Prostate gland (tissue), 2 donors: ENCODE measurements at regions of chr9 and their contacts with region 1.

Region 1: DNA sequence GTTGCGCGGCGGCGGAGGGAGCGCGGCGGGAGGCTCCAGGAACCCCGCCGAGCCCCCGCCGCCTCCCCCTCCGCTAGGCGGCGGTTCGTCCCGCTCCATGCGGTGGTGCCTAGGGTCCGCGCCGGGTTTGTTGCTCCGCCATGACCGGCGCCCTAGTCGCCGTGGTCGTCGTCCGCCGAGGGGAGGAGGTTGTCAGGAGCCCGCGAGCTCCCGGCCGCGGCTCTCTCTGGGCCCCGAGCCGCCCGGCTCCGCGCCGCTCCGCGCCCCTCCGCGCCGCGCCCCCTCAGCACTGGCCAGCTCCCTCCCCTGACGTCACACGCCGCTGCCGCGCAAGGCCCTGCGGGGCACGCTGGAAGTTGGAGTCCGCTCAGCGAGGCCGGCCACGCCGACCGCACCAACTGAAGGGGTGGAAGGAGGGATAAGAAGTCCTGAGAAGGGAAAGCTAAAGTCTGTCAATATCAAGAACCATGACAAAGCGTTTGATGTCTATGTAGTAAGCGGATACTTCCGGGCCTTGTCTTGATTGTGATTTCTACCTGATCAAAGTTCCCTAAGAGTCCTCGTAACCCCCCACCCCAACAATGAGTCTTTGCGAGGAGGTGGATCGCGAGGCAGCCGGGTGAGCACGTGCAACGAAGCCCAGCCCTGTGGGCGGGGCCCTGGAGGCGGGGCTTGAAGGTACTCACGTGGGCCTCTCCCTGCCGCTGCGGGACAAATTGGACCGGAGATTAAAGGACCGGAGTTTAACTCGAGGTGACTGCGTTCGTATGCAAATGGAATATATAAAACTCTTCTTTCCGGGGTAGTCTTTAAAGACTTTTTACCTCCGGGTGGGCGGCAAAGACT is at the start of gene NR6A1:
- DNase-seq: peak; percentile 97
- H3K4me3 ChIP-seq: peak within 1 kb of the TSS; percentile 88 to 93
- H3K27ac ChIP-seq: peak within 1 kb of the TSS; percentile 60 to 74
- H3K4me1 ChIP-seq: no peaks in the 10 kb centered on the region
- H3K27me3 ChIP-seq: peaks cover 2% of the 10 kb centered on the region
- CTCF ChIP-seq: peak in 3 of 4 experiments; percentile 34 to 54 (median 46)
- POLR2A ChIP-seq: peak; percentile 93
- total RNA-seq, gene NR6A1: 1.3 to 53.7 TPM

Region 2: GRCh38 chr9:124441291-124441690 is 330.0 kb before region 1 on chr9:
- intact Hi-C with region 1: no loop called
- DNase-seq: no peak
- H3K4me3 ChIP-seq: no peak overlapping the region
- H3K27ac ChIP-seq: no peak overlapping the region
- H3K4me1 ChIP-seq: no peaks in the 10 kb centered on the region
- H3K27me3 ChIP-seq: no peaks in the 10 kb centered on the region
- CTCF ChIP-seq: no peak
- POLR2A ChIP-seq: no peak

Region 3: GRCh38 chr9:124852829-124853531 is 81.7 kb after region 1 on chr9 and contains the start of gene WDR38:
- intact Hi-C with region 1: loop called (anchors 1 kb)
- DNase-seq: peak; percentile 67
- H3K4me3 ChIP-seq: peak within 1 kb of the TSS; percentile 30 to 34
- H3K27ac ChIP-seq: peak within 1 kb of the TSS in 1 of 2 donors; percentile 4
- H3K4me1 ChIP-seq: peaks cover 4% of the 10 kb centered on the region
- H3K27me3 ChIP-seq: no peaks in the 10 kb centered on the region
- CTCF ChIP-seq: peak; percentile 96 to 100 (median 97)
- POLR2A ChIP-seq: no peak
- total RNA-seq, gene WDR38: not detected

Region 4: GRCh38 chr9:125374443-125375309 is 603.4 kb after region 1 on chr9:
- intact Hi-C with region 1: loop called (anchors 2 kb)
- DNase-seq: peak; percentile 42
- H3K4me3 ChIP-seq: no peak overlapping the region
- H3K27ac ChIP-seq: no peak overlapping the region
- H3K4me1 ChIP-seq: no peaks in the 10 kb centered on the region
- H3K27me3 ChIP-seq: no peaks in the 10 kb centered on the region
- CTCF ChIP-seq: peak; percentile 44 to 82 (median 70)
- POLR2A ChIP-seq: no peak